ENCODE measurements at regions of chr12 and their contacts with region 1.

Region 1: DNA sequence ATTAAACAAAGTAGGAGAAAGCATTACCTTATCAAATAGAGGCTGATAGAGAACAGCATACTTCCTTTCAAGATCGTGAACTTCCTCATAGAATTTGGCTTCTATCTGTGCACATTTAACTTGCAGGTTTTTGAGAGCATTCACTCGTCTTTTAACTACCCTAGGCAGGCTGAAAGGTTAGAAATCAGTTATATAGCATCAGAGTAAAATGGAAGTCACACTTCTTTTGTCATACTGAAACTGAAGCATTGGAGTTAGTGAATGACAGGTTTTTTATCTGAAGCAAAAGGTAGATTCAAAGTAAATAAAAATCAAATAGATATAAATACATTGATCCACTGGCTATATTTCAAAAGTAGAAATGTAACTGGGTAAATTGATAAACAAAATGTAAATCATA is 24.4 kb downstream of the NAP1L1 start:
- DNase-seq: no peak
- H3K4me3 Mint-ChIP-seq: no peak overlapping the region
- H3K27ac Mint-ChIP-seq: no peak overlapping the region
- H3K4me1 Mint-ChIP-seq: peaks cover 25% of the 10 kb centered on the region
- H3K27me3 Mint-ChIP-seq: no peaks in the 10 kb centered on the region

Region 2: GRCh38 chr12:76020731-76021672 is 39.1 kb before region 1 on chr12:
- CTCF ChIA-PET with region 1: no interaction called
- intact Hi-C with region 1: no loop called
- DNase-seq: peak; percentile 91
- H3K4me3 Mint-ChIP-seq: peak overlapping the region; percentile 40
- H3K27ac Mint-ChIP-seq: peak overlapping the region; percentile 95
- H3K4me1 Mint-ChIP-seq: peaks cover 45% of the 10 kb centered on the region
- H3K27me3 Mint-ChIP-seq: no peaks in the 10 kb centered on the region

Region 3: GRCh38 chr12:76047060-76047459 is 13.1 kb before region 1 on chr12:
- CTCF ChIA-PET with region 1: interaction called, 3 read pairs
- intact Hi-C with region 1: loop called (anchors 2 kb)
- DNase-seq: no peak
- H3K4me3 Mint-ChIP-seq: no peak overlapping the region
- H3K27ac Mint-ChIP-seq: no peak overlapping the region
- H3K4me1 Mint-ChIP-seq: peaks cover 3% of the 10 kb centered on the region
- H3K27me3 Mint-ChIP-seq: no peaks in the 10 kb centered on the region

Measured in activated naive CD4-positive, alpha-beta T cell treated with anti-CD3 and anti-CD28 coated beads for 36 hours (primary cell).